ENCODE measurements at regions of chr7 and their contacts with region 1.

Region 1: DNA sequence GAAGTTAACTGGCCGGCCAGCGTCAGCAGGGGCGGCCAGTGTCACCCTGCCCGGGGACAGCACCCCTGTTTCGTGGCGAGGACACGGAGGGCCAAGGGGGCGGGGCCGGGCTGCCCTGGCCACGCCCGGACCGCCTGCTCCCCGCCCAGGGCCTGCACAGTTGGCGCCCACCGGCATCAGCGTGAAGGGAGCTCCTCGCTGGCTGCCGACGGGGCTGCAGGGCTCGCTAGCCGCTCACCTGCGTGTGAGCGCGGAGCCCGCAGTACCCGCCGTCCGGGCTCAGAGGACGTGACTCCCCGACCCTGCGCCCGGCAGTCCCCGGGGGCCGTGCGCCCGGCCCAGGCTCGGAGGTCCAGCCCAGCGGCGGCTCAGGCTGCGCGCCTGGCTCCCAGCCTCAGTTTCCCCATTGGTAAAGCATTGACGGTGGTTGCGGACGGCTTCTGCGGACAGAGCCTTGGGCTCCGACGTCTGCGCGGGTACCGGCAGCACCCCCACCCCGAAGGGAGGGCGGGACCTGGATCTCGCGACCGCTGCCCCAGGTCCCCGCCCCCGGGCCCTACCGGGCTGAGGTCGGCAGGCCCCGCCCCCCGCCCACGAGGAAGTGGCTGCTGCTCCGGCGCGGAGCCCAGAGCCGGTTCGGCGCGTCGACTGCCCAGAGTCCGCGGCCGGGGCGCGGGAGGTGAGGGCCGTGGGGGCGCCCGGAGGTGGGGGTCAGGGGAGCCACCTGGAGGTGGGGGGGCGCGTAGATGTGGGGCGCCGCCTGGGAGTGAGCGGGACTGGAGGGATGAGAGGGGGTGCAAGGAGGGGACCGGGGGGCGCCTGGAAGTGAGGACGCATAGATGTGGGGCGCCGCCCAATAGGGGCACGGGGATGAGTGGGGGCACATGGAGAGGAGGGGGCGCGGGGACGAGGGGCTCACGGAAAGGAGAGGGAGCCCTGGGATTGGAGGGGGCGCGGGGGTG is at the start of gene ARPC1B:
- DNase-seq: peak; percentile 69 to 94 (median 86)
- ATAC-seq: peak; percentile 55
- H3K4me3 ChIP-seq: peak within 1 kb of the TSS; percentile 70 to 90
- H3K4me3 Mint-ChIP-seq: peak within 1 kb of the TSS; percentile 84
- H3K27ac ChIP-seq: peak within 1 kb of the TSS; percentile 84 to 91
- H3K27ac Mint-ChIP-seq: peak within 1 kb of the TSS; percentile 96
- H3K4me1 ChIP-seq: peaks cover 55% of the 10 kb centered on the region
- H3K4me1 Mint-ChIP-seq: peaks cover 36% of the 10 kb centered on the region
- H3K27me3 ChIP-seq: no peaks in the 10 kb centered on the region
- H3K27me3 Mint-ChIP-seq: no peaks in the 10 kb centered on the region
- CTCF ChIP-seq: no peak
- total RNA-seq, gene ARPC1B: 68.5 to 70.5 TPM

Region 2: DNA sequence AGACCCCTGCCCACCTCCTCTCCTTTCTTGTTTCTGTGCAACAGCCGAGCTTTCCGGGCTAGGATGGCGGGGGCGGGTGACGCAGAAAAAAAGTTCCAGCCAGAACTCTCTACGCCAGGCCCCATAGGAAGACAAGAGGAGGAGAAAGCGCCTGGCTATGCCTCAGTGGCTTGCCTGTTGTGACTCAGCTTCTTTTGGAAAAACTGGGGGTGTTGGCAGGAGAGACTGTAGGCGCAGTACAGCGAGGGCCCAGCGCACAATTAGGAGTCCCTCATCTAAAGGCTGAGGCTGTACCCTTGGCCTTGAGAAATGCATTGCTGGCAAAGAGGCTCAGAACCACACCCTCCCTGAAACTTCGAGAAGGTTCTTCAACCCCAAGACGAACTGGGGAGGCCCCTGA is 138.5 kb before region 1 on chr7:
- CTCF ChIA-PET with region 1: no interaction called
- POLR2A ChIA-PET with region 1: no interaction called
- intact Hi-C with region 1: no loop called
- DNase-seq: no peak
- ATAC-seq: no peak
- H3K4me3 ChIP-seq: no peak overlapping the region
- H3K4me3 Mint-ChIP-seq: no peak overlapping the region
- H3K27ac ChIP-seq: no peak overlapping the region
- H3K27ac Mint-ChIP-seq: no peak overlapping the region
- H3K4me1 ChIP-seq: no peaks in the 10 kb centered on the region
- H3K4me1 Mint-ChIP-seq: no peaks in the 10 kb centered on the region
- H3K27me3 ChIP-seq: no peaks in the 10 kb centered on the region
- H3K27me3 Mint-ChIP-seq: peaks cover 8% of the 10 kb centered on the region
- CTCF ChIP-seq: no peak

Region 3: GRCh38 chr7:99386584-99387238 is 12.3 kb after region 1 on chr7:
- CTCF ChIA-PET with region 1: interaction called, 10 read pairs
- POLR2A ChIA-PET with region 1: interaction called, 25 read pairs
- intact Hi-C with region 1: no loop called
- DNase-seq: peak in 5 of 9 experiments; percentile 47 to 73 (median 60)
- ATAC-seq: peak; percentile 75
- H3K4me3 ChIP-seq: no peak overlapping the region
- H3K4me3 Mint-ChIP-seq: no peak overlapping the region
- H3K27ac ChIP-seq: no peak overlapping the region
- H3K27ac Mint-ChIP-seq: peak overlapping the region; percentile 75
- H3K4me1 ChIP-seq: peaks cover 20% of the 10 kb centered on the region
- H3K4me1 Mint-ChIP-seq: peaks cover 27% of the 10 kb centered on the region
- H3K27me3 ChIP-seq: no peaks in the 10 kb centered on the region
- H3K27me3 Mint-ChIP-seq: no peaks in the 10 kb centered on the region
- CTCF ChIP-seq: peak; percentile 27

Measured in CD8-positive, alpha-beta T cell (primary cell).